ENCODE measurements at regions of chr14 and their contacts with region 1.

Region 1: DNA sequence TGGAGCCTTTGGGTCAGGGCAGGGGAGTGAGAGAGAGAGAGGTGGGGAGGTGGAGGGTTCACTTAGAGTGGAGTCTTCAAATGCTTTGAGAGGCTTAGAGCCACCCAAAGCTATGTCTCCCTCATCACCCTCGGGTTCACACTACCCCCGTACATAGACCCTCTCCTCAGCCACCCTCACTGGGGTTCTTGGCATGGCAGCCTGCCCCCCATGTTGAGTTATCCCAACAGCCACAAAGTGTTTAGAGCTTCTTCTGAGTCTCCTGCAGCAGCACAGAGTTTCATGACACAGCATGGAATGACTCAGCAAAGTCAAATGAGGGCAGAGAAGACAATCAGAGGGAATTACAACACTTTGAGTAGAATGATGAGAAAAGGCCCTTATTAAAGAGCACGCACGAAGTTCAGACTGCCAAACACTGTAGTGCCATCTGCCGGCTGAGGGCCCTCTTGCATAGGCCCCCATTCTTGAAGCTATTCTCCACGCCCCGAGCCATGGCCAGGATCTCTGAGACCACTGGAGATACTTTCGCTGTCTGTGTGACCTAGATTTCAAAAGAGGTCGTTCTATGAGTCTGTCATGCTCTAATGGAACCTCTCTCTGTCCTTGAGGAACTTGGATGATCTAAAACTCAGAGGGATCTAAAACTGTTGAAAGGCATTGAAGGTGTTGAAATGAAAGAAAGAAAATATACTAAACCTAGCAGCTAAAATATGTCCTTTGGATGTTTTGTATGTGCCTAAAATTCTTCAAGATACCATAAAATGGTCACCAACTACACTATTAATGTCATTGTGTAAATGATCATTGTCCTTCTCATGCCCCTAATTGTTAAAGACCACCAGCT is 221.9 kb downstream of the PELI2 start:
- DNase-seq: peak; percentile 44
- CTCF ChIP-seq: peak; percentile 83

Region 2: GRCh38 chr14:55731881-55732498 is 608.1 kb before region 1 on chr14:
- in situ Hi-C with region 1: loop called (anchors 25 kb)
- DNase-seq: peak; percentile 18
- CTCF ChIP-seq: peak; percentile 66

Region 3: GRCh38 chr14:56816574-56817391 is 476.7 kb after region 1 on chr14:
- in situ Hi-C with region 1: no loop called
- DNase-seq: no peak
- CTCF ChIP-seq: no peak